PC-3 (cell line): ENCODE measurements at regions of chr7 and their contacts with region 1.

Region 1: GRCh38 chr7:121003986-121004685 is 15.6 kb downstream of the CPED1 start:
- DNase-seq: no peak
- ATAC-seq: no peak
- H3K4me3 ChIP-seq: no peak overlapping the region
- H3K27ac ChIP-seq: no peak overlapping the region
- H3K4me1 ChIP-seq: peaks cover 29% of the 10 kb centered on the region
- H3K27me3 ChIP-seq: no peaks in the 10 kb centered on the region
- CTCF ChIP-seq: no peak

Region 2: DNA sequence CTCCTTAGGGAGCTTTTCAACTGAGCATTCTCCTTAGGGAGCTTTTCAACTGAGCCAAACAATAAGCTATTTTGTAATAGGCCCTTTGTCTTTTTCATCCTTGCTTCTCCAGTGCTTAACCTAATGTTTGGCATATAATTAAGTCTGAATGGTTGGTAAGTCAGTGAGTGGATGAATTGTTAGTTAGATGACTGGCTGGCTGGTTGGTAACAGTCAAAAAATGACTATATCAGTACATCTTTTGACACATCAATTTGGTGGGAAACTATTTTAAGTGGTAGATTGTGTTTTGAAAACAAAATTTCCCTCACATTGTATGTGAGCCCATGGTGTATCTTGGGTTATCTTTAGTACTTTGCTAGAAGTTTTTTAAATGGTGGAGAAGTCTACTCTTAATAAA is 37.2 kb before region 1 on chr7:
- CTCF ChIA-PET with region 1: no interaction called
- POLR2A ChIA-PET with region 1: no interaction called
- intact Hi-C with region 1: no loop called
- DNase-seq: no peak
- ATAC-seq: no peak
- H3K4me3 ChIP-seq: no peak overlapping the region
- H3K27ac ChIP-seq: no peak overlapping the region
- H3K4me1 ChIP-seq: no peaks in the 10 kb centered on the region
- H3K27me3 ChIP-seq: no peaks in the 10 kb centered on the region
- CTCF ChIP-seq: no peak

Region 3: GRCh38 chr7:121049028-121049791 is 45.1 kb after region 1 on chr7:
- CTCF ChIA-PET with region 1: no interaction called
- POLR2A ChIA-PET with region 1: no interaction called
- intact Hi-C with region 1: loop called (anchors 2 kb)
- DNase-seq: peak; percentile 16
- ATAC-seq: peak; percentile 80
- H3K4me3 ChIP-seq: no peak overlapping the region
- H3K27ac ChIP-seq: no peak overlapping the region
- H3K4me1 ChIP-seq: peaks cover 3% of the 10 kb centered on the region; the same call in 1 of the 2 replicates
- H3K27me3 ChIP-seq: no peaks in the 10 kb centered on the region
- CTCF ChIP-seq: no peak